Endothelial cell of umbilical vein (primary cell): ENCODE measurements at regions of chr1 and their contacts with region 1.

Region 1: GRCh38 chr1:101238681-101239094 is 1.9 kb downstream of the S1PR1 start:
- DNase-seq: peak; percentile 94
- H3K4me3 ChIP-seq: peak overlapping the region; percentile 81 to 100 (median 88)
- H3K27ac ChIP-seq: peak overlapping the region; percentile 99
- H3K4me1 ChIP-seq: peaks cover 55% of the 10 kb centered on the region
- H3K27me3 ChIP-seq: no peaks in the 10 kb centered on the region
- CTCF ChIP-seq: peak; percentile 97 to 98
- POLR2A ChIP-seq: peak; percentile 46

Region 2: DNA sequence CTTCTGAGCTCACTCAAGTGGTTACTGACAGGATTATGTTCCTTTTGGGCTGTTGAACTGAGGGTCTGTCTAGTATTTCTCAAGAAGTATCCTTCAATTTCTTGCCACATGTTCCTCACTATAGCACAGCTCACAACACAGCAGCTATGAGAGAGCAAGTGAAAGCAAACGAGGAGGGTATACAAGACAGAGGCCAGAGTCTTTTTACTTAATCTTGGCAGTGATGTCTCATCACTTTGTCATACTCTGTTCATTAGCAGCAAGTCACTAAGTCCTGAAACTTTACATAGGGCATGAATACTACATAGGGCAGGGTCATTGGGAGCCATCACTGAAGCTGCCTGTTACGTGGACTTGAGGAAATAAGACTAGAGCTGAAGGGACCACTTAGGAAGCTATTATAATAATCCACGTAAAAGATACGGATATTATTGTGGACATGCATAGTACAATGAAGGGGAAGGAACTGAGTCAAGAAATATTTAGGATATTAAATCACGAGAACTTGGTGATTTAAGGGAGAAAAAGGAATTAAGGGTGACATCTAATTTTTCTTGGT is 279.1 kb before region 1 on chr1:
- CTCF ChIA-PET with region 1: interaction called, 11 read pairs
- POLR2A ChIA-PET with region 1: no interaction called
- dilution Hi-C with region 1: no loop called
- intact Hi-C with region 1: no loop called
- DNase-seq: peak; percentile 85
- H3K4me3 ChIP-seq: no peak overlapping the region
- H3K27ac ChIP-seq: peak overlapping the region; percentile 62
- H3K4me1 ChIP-seq: peaks cover 31% of the 10 kb centered on the region
- H3K27me3 ChIP-seq: no peaks in the 10 kb centered on the region
- CTCF ChIP-seq: no peak
- POLR2A ChIP-seq: no peak

Region 3: DNA sequence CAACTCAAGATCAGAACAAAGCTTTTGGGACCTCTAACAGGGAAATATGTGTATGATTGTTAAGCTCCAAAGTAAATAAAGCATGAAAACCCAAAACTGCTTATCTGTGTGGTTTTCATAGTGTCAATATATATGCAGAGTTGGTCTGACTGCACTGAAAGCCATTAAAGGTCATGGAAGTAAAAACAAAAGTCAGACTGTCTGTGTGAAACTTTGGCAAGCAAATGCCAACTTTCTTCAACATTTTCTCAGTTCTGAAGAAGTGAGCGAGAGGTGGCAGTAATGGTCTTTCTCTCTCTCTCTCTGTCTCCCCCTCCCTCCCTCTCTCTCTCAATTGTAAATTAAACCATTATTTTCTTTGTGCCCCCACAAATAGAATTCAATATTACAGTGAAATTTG is 101.9 kb before region 1 on chr1:
- CTCF ChIA-PET with region 1: interaction called, 135 read pairs
- POLR2A ChIA-PET with region 1: interaction called, 26 read pairs
- dilution Hi-C with region 1: no loop called
- intact Hi-C with region 1: loop called (anchors 1 kb)
- DNase-seq: peak; percentile 91
- H3K4me3 ChIP-seq: no peak overlapping the region
- H3K27ac ChIP-seq: no peak overlapping the region
- H3K4me1 ChIP-seq: peaks cover 28% of the 10 kb centered on the region
- H3K27me3 ChIP-seq: no peaks in the 10 kb centered on the region
- CTCF ChIP-seq: peak; percentile 33 to 43
- POLR2A ChIP-seq: no peak

Region 4: GRCh38 chr1:101187297-101187696 is 51.4 kb before region 1 on chr1:
- CTCF ChIA-PET with region 1: interaction called, 12 read pairs
- POLR2A ChIA-PET with region 1: interaction called, 4 read pairs
- dilution Hi-C with region 1: no loop called
- intact Hi-C with region 1: loop called (anchors 1 kb)
- DNase-seq: peak; percentile 56
- H3K4me3 ChIP-seq: no peak overlapping the region
- H3K27ac ChIP-seq: peak overlapping the region; percentile 67
- H3K4me1 ChIP-seq: peaks cover 44% of the 10 kb centered on the region
- H3K27me3 ChIP-seq: no peaks in the 10 kb centered on the region
- CTCF ChIP-seq: no peak
- POLR2A ChIP-seq: no peak

Region 5: GRCh38 chr1:101288491-101288944 is 49.8 kb after region 1 on chr1:
- CTCF ChIA-PET with region 1: interaction called, 368 read pairs
- POLR2A ChIA-PET with region 1: interaction called, 22 read pairs
- dilution Hi-C with region 1: no loop called
- intact Hi-C with region 1: loop called (anchors 1 kb)
- DNase-seq: peak; percentile 97
- H3K4me3 ChIP-seq: no peak overlapping the region
- H3K27ac ChIP-seq: peak overlapping the region; percentile 76
- H3K4me1 ChIP-seq: peaks cover 41% of the 10 kb centered on the region
- H3K27me3 ChIP-seq: no peaks in the 10 kb centered on the region
- CTCF ChIP-seq: peak; percentile 76 to 85
- POLR2A ChIP-seq: no peak

Region 6: GRCh38 chr1:101410048-101410878 is 171.6 kb after region 1 on chr1:
- CTCF ChIA-PET with region 1: no interaction called
- POLR2A ChIA-PET with region 1: no interaction called
- dilution Hi-C with region 1: no loop called
- intact Hi-C with region 1: no loop called
- DNase-seq: peak; percentile 88
- H3K4me3 ChIP-seq: peak overlapping the region in 1 of 3 experiments; percentile 33
- H3K27ac ChIP-seq: peak overlapping the region; percentile 69
- H3K4me1 ChIP-seq: peaks cover 19% of the 10 kb centered on the region
- H3K27me3 ChIP-seq: no peaks in the 10 kb centered on the region
- CTCF ChIP-seq: no peak
- POLR2A ChIP-seq: no peak

Region 7: GRCh38 chr1:101438359-101438758 is 199.7 kb after region 1 on chr1:
- CTCF ChIA-PET with region 1: no interaction called
- POLR2A ChIA-PET with region 1: no interaction called
- dilution Hi-C with region 1: no loop called
- intact Hi-C with region 1: loop called (anchors 2 kb)
- DNase-seq: peak; percentile 59
- H3K4me3 ChIP-seq: no peak overlapping the region
- H3K27ac ChIP-seq: no peak overlapping the region
- H3K4me1 ChIP-seq: no peaks in the 10 kb centered on the region
- H3K27me3 ChIP-seq: peaks cover 6 to 8% of the 10 kb centered on the region in 2 experiments
- CTCF ChIP-seq: peak; percentile 44 to 55
- POLR2A ChIP-seq: no peak